Right ventricle myocardium superior (tissue), 1 donor: ENCODE measurements at regions of chrX and their contacts with region 1.

Region 1: DNA sequence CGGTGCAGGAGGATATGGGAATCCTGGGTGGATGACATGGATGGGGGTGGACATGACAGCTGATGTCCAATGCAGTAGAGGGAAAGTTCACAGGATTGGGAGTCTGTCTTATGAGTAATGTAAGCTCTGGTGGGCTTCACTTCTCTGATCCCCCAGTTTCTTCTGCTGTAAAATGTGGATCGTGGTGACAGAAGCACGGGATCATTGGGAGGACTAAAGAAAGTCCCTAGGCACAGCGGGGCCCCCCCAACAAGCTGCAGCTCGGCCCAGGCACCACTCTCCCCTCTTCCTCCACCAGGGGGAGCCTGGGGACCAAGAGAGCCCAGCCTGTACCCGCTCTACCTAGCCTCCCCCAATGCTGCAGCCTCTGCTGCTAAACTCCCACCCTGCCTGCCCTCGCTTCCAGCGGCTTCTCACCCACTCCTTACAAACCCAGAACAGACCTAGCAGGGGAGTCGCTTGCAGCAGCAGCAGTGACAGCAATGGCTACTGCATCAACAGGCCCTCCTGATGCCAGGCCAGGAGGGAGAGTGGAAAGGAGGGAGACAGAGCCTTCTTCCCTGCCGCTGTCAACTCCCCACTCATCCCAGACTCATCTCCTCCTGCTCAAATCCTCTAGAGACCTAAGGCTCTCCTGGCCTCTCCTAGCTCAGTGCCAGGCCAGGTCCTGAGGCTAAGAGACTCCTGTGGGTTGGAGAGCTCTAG is 36.1 kb upstream of the IQSEC2 start:
- DNase-seq: peak; percentile 70
- ATAC-seq: peak; percentile 68

Region 2: DNA sequence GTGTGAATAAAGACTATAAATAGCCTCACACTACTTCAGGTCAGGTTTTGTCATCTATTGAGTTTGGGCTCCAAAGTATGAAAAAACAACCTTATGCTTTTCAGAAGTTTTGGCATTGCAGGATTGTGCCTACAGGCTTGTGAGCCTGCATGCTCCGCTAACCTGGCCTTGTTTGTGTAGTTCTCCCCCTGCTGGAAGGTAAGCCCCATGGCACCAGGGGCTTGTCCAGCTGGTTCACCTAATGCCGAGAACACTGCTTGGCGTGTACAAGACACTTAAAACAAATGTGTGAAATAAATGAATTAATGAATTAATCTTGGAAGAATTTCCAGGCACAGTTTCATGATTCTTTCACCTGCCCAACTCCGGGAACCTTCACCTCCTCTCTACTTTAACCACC is 118.5 kb after region 1 on chrX:
- intact Hi-C with region 1: loop called (anchors 5 kb)
- DNase-seq: peak; percentile 46
- ATAC-seq: peak; percentile 60

Region 3: DNA sequence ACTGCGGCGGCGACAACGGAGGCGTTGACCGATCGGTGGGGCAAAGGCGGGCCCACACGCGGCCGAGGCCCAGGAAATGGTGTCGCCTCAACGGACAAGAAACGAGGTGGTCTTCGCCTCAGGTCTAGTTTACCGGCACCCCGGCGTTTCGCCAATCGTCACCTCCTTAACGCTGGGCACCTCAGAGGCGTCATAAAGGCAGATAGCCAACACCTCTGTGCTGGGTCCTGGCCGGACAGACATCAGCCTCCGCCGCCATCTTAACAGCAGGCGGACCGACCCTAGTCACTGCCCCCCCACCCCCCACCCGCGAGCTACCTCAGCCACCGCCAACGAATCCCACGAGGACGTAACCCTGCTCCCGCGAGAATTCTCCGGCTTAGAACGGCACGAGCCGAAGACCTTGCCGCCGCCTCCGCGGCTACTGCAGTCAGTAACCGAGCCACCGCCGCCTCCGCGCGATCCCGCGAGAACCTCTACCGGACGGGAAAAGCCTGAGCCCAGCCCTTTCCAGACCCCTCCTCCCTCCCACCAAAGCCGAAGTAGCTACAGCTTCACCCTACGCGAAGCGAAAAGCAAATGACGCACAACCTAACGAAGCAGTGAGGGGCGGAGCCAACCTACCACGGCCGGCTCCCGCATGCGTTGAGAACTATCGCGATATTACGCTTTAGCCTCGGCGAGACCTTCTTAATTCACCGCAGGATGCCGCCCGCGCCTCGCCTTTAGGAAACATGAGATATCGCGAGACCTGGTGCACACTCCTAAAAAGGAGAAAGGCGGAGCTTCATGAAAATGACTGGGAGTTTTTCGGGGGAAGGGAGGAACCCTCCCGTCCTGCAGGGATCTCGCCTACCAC is 366.3 kb after region 1 on chrX:
- intact Hi-C with region 1: no loop called
- DNase-seq: peak; percentile 93
- ATAC-seq: peak; percentile 89